K562 (cell line): ENCODE measurements at regions of chr5 and their contacts with region 1.

Region 1: GRCh38 chr5:95760273-95761191 is 29.4 kb downstream of the RHOBTB3 start:
- DNase-seq: no peak
- ATAC-seq: no peak
- H3K4me3 ChIP-seq: no peak overlapping the region
- H3K27ac ChIP-seq: no peak overlapping the region
- H3K4me1 ChIP-seq: no peaks in the 10 kb centered on the region
- H3K27me3 ChIP-seq: no peaks in the 10 kb centered on the region
- CTCF ChIP-seq: no peak
- EP300 ChIP-seq: no peak
- POLR2A ChIP-seq: no peak; the same call in 1 of the 2 replicates
- RAD21 ChIP-seq: no peak

Region 2: GRCh38 chr5:95543017-95543705 is 217.4 kb before region 1 on chr5:
- CTCF ChIA-PET with region 1: no interaction called
- POLR2A ChIA-PET with region 1: no interaction called
- in situ Hi-C with region 1: loop called (anchors 10 kb)
- intact Hi-C with region 1: no loop called
- DNase-seq: peak in 2 of 4 experiments; percentile 35
- ATAC-seq: peak; percentile 86
- H3K4me3 ChIP-seq: no peak overlapping the region
- H3K27ac ChIP-seq: peak overlapping the region; percentile 25; the same call in 1 of the 3 replicates
- H3K4me1 ChIP-seq: peaks cover 0 to 2% of the 10 kb centered on the region in 2 experiments; a peak in 2 of 5 replicates
- H3K27me3 ChIP-seq: no peaks in the 10 kb centered on the region
- CTCF ChIP-seq: no peak
- EP300 ChIP-seq: no peak
- POLR2A ChIP-seq: no peak
- RAD21 ChIP-seq: no peak

Region 3: GRCh38 chr5:95770830-95771708 is 10.5 kb after region 1 on chr5:
- CTCF ChIA-PET with region 1: no interaction called
- POLR2A ChIA-PET with region 1: interaction called, 26 read pairs
- in situ Hi-C with region 1: no loop called
- intact Hi-C with region 1: no loop called
- DNase-seq: no peak
- ATAC-seq: no peak
- H3K4me3 ChIP-seq: no peak overlapping the region
- H3K27ac ChIP-seq: no peak overlapping the region
- H3K4me1 ChIP-seq: peaks cover 8 to 19% of the 10 kb centered on the region in 2 experiments
- H3K27me3 ChIP-seq: no peaks in the 10 kb centered on the region
- CTCF ChIP-seq: no peak
- EP300 ChIP-seq: no peak
- POLR2A ChIP-seq: no peak
- RAD21 ChIP-seq: no peak